Activated B cell treated with CpG ODN at 0.5 μM for 24 hours (primary cell): ENCODE measurements at regions of chr19 and their contacts with region 1.

Region 1: DNA sequence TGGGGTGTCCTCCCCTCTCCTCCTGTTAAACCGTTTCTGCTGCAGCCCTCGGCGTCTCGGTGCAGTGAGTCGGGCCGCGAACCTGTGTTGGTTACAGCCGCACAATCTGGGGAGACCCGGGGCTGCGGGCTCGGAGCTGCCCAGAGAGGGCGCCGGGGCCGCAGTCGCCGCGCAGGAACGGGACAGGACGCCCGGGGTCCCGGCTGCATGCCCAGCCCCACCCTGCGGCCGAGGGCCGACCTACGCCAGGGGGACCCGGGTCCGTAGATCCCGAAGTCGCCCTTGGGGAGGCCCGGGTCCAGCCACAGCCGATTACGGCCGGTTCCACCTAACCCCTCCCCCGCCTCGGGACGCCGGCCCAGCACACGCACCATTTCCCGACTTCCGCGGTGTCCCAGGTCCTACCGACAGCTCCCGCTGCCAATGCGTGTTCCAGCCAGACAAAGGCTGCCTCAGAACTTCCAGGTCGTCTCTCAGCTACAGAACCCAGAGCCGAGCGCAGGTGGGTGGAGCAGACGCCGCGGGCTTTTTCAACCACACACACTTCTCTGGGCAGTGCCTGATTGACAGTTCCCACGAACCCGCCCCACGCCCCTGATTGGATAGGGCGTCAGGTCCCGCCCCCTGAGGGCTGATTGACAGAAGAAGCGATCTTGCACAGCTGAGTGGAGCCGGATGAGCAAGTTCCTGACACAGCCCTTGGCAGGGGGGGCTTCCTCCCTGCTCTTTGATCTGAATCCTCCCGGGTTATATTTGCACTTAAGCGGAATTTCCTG is at the start of gene ZNF443:
- DNase-seq: peak; percentile 98
- ATAC-seq: peak; percentile 95
- H3K4me3 Mint-ChIP-seq: peak within 1 kb of the TSS; percentile 100
- H3K27ac Mint-ChIP-seq: peak within 1 kb of the TSS; percentile 89
- H3K4me1 Mint-ChIP-seq: peaks cover 27% of the 10 kb centered on the region
- H3K27me3 Mint-ChIP-seq: no peaks in the 10 kb centered on the region
- CTCF ChIP-seq: no peak
- total RNA-seq, gene ZNF443: 3.5 and 3.6 TPM in 2 replicates

Region 2: DNA sequence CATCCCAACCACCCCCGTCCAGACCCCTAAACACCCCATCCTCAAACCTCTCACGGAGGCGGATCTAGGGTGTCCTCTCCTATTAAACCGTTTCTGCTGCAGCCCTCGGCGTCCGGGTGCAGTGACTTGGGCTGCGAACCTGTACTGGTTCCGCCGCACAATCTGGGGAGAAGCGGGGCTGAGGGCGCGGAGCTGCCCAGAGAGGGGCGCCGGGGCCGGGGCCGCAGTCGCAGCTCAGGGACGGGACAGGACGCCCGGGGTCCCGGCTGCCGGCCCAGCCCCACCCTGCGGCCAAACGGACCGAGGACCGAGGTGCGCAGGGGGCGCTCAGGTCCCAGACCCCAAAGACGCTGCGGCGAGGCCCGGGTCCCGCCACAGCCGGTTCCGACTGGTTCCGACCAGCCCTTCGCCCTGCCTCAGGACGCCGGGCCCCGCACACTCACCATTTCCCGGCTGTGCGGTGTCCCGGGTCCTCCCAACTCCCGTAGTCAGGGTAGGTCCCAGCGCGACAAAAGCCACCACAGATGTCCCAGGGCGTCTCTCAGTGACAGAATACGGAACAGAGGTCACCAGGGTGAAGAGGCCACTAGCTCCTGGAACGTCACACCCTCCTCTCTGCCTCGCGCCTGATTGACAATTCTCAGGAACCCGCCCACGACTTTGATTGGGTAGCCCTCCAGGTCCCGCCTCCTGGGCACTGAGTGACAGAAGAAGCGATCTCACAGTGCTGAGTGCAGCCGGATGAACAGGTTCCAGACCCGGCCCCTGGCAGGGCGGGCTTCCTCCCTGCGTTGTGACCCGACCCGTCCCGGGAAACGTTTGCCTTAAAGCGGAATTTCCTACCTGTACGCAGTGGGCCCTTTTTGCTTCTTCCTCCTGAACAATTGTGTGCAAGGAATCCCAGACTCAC is 146.2 kb before region 1 on chr19 and contains the start of gene ZNF44:
- CTCF ChIA-PET with region 1: no interaction called
- POLR2A ChIA-PET with region 1: interaction called, 10 read pairs
- intact Hi-C with region 1: loop called (anchors 1 kb)
- DNase-seq: peak; percentile 87
- ATAC-seq: peak; percentile 93
- H3K4me3 Mint-ChIP-seq: peak within 1 kb of the TSS; percentile 99
- H3K27ac Mint-ChIP-seq: peak within 1 kb of the TSS; percentile 95
- H3K4me1 Mint-ChIP-seq: peaks cover 35% of the 10 kb centered on the region
- H3K27me3 Mint-ChIP-seq: no peaks in the 10 kb centered on the region
- CTCF ChIP-seq: no peak
- total RNA-seq, gene ZNF44: 20.6 and 26.4 TPM in 2 replicates

Region 3: DNA sequence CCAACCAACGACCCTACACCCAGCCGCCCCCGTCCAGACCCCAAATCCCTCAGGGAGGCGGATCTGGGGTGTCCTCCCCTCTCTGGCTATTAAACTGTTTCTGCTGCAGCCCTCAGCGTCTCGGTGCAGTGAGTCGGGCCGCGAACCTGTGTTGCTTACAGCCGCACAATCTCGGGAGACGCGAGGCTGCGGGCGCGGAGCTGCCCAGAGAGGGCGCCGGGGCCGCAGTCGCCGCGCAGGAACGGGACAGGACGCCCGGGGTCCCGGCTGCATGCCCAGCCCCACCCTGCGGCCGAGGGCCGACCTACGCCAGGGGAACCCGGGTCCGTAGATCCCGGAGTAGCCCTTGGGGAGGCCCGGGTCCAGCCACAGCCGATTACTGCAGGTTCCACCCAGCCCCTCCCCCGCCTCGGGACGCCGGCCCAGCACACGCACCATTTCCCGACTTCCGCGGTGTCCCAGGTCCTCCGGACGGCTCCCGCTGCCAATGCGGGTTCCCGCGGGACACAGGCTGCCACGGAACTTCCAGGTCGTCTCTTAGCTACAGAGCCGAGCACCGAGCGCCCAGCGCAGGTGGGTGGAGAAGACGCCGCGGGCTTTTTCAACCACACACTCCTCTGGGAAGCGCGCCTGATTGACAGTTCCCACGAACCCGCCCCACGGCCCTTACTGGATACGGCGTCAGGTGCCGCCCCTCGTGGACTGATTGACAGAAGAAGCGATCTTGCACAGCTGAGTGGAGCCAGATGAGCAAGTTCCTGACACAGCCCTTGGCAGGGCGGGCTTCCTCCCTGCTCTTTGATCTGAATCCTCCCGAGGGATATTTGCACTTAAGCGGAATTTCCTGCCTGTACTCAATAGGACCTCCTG is 39.9 kb before region 1 on chr19 and contains the start of gene ZNF799:
- CTCF ChIA-PET with region 1: no interaction called
- POLR2A ChIA-PET with region 1: interaction called, 5 read pairs
- intact Hi-C with region 1: loop called (anchors 1 kb)
- DNase-seq: peak; percentile 83
- ATAC-seq: peak; percentile 89
- H3K4me3 Mint-ChIP-seq: peak within 1 kb of the TSS; percentile 92
- H3K27ac Mint-ChIP-seq: peak within 1 kb of the TSS; percentile 77
- H3K4me1 Mint-ChIP-seq: peaks cover 22% of the 10 kb centered on the region
- H3K27me3 Mint-ChIP-seq: no peaks in the 10 kb centered on the region
- CTCF ChIP-seq: no peak
- total RNA-seq, gene ZNF799: 6.8 and 6.9 TPM in 2 replicates

Region 4: DNA sequence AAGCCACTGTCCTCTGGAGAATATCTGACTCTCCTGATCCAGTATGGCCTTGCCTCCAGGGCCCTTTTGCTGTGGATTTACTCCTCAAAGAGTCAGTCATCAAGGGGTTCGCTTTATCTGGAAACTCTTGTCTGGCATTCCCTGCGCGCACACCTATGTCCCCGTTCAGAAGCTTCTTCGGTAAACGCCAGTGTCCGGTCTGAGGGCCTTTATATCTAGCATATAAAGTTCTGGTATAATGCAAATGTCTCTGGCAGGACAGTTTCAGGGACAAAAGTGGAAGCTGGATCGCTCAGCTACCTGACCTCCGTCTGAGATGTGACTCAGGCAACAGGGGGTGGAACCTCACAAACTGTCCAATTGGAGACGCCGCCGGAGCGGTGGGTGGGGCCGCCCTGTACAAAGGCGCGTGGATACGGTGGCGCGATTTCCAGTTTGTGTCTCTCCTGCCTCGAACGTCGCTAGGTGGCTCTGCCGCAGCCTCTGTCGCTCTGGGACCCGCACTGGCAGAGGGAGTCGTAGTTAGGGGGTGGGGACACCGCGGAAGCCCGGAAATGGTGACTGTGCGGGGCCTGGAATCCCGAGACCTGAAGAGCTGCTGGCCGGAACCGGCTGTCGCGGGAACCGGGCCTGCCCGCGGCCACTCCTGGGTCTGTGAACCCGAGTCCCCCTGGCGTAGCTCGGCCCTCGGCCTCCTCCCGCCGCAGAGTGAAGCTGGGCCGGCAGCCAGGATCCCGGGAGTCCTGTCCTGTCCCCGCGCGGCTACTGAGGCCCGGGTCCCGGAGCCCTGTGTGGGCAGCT is 54.5 kb after region 1 on chr19:
- CTCF ChIA-PET with region 1: no interaction called
- POLR2A ChIA-PET with region 1: interaction called, 10 read pairs
- intact Hi-C with region 1: loop called (anchors 2 kb)
- DNase-seq: peak; percentile 82
- ATAC-seq: peak; percentile 99
- H3K4me3 Mint-ChIP-seq: peak overlapping the region; percentile 90
- H3K27ac Mint-ChIP-seq: peak overlapping the region; percentile 82
- H3K4me1 Mint-ChIP-seq: peaks cover 13% of the 10 kb centered on the region
- H3K27me3 Mint-ChIP-seq: no peaks in the 10 kb centered on the region
- CTCF ChIP-seq: no peak